MCF 10A (cell line): ENCODE measurements at regions of chr3 and their contacts with region 1.

Region 1: GRCh38 chr3:99678023-99678422 is 39.6 kb downstream of the COL8A1 start:
- DNase-seq: peak; percentile 77
- H3K4me3 Mint-ChIP-seq: no peak overlapping the region
- H3K27ac Mint-ChIP-seq: peak overlapping the region; percentile 72
- H3K4me1 Mint-ChIP-seq: peaks cover 44% of the 10 kb centered on the region
- H3K27me3 Mint-ChIP-seq: no peaks in the 10 kb centered on the region
- CTCF ChIP-seq: no peak

Region 2: GRCh38 chr3:99532246-99532645 is 145.8 kb before region 1 on chr3:
- CTCF ChIA-PET with region 1: no interaction called
- POLR2A ChIA-PET with region 1: no interaction called
- intact Hi-C with region 1: no loop called
- DNase-seq: peak; percentile 80
- H3K4me3 Mint-ChIP-seq: no peak overlapping the region
- H3K27ac Mint-ChIP-seq: peak overlapping the region; percentile 10
- H3K4me1 Mint-ChIP-seq: peaks cover 26% of the 10 kb centered on the region
- H3K27me3 Mint-ChIP-seq: no peaks in the 10 kb centered on the region
- CTCF ChIP-seq: peak; percentile 29

Region 3: DNA sequence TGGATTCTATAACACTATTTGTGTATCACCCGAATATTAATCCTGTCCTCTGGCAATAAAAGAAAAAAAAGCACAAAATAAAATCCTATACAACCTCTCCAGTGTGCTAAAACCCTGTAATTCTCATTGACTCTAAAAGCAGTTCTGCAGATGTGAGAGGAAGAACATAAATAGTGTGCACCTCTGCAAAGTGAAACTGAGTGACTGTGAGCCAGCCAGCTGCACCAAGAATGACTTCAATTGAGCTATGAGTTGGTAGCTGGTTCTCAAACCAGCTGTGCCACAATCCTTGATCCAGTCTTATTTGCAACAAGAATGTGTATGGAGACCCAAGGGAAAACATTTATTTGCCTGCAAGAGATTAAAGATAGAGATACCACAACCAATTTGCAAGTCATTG is 70.9 kb before region 1 on chr3:
- CTCF ChIA-PET with region 1: no interaction called
- POLR2A ChIA-PET with region 1: no interaction called
- intact Hi-C with region 1: no loop called
- DNase-seq: no peak
- H3K4me3 Mint-ChIP-seq: no peak overlapping the region
- H3K27ac Mint-ChIP-seq: no peak overlapping the region
- H3K4me1 Mint-ChIP-seq: no peaks in the 10 kb centered on the region
- H3K27me3 Mint-ChIP-seq: no peaks in the 10 kb centered on the region
- CTCF ChIP-seq: no peak

Region 4: DNA sequence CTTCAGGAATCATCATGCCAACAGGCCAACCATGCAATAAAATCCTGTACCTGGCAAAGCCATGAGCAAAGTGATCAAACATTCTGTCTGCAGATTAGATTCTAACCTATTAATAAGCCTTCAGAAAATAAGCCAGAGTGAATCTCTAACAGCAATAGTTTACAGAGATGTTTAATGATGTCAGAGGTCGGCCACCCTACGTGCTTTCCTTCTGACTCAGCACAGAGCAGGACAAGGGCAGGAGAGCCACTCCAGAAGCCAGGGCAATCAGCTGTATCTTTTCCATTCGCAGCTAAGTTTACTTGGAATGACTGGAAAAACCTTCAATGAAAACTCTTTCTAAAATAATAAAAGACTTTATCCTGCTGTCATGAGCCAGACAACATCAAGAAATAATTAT is 26.5 kb before region 1 on chr3:
- CTCF ChIA-PET with region 1: interaction called, 209 read pairs
- POLR2A ChIA-PET with region 1: interaction called, 14 read pairs
- intact Hi-C with region 1: no loop called
- DNase-seq: peak; percentile 55
- H3K4me3 Mint-ChIP-seq: peak overlapping the region; percentile 19
- H3K27ac Mint-ChIP-seq: peak overlapping the region; percentile 51
- H3K4me1 Mint-ChIP-seq: peaks cover 69% of the 10 kb centered on the region
- H3K27me3 Mint-ChIP-seq: no peaks in the 10 kb centered on the region
- CTCF ChIP-seq: no peak